Gastrocnemius medialis (tissue), 4 donors: ENCODE measurements at regions of chr11 and their contacts with region 1.

Region 1: GRCh38 chr11:8964324-8965320 is at the start of gene TMEM9B:
- DNase-seq: peak; percentile 86 to 87
- ATAC-seq: peak; percentile 94 to 96
- H3K4me3 ChIP-seq: peak within 1 kb of the TSS; percentile 79 to 98 (median 84)
- H3K27ac ChIP-seq: peak within 1 kb of the TSS; percentile 96 to 97 (median 96)
- H3K4me1 ChIP-seq: peaks cover 22 to 24% of the 10 kb centered on the region in 2 donors
- H3K27me3 ChIP-seq: no peaks in the 10 kb centered on the region
- CTCF ChIP-seq: no peak
- POLR2A ChIP-seq: peak; percentile 91 to 96
- total RNA-seq, gene TMEM9B: 29.4 to 45.3 (median 40.1) TPM

Region 2: GRCh38 chr11:8225589-8226036 is 739.0 kb before region 1 on chr11:
- in situ Hi-C with region 1: loop called in 1 of 4 experiments (anchors 25 kb)
- intact Hi-C with region 1: no loop called
- DNase-seq: peak; percentile 43 to 62
- ATAC-seq: peak; percentile 58 to 81
- H3K4me3 ChIP-seq: no peak overlapping the region
- H3K27ac ChIP-seq: no peak overlapping the region
- H3K4me1 ChIP-seq: no peaks in the 10 kb centered on the region
- H3K27me3 ChIP-seq: no peaks in the 10 kb centered on the region
- CTCF ChIP-seq: peak; percentile 95
- POLR2A ChIP-seq: no peak

Region 3: DNA sequence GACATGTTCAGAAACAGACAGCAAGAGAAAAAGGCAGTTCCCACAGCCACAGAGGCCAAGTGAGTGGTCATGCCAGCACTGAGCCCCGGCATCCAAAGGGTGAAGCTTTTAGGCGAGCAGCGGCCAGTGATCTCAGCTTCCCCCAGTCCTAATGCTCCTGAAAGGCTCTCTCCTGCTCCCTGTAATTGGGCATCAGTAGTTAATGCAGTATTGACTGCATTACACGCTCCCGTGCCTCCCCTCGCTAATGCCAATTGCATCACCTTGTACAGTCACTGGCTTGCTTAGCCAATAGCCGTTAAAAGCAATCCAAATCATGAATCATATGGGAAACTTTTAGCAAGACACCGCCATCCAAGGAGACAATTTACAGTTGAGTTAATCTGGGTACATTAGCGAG is 705.8 kb before region 1 on chr11:
- in situ Hi-C with region 1: no loop called
- intact Hi-C with region 1: loop called (anchors 10 kb)
- DNase-seq: peak; percentile 58 to 61
- ATAC-seq: peak; percentile 50 to 64
- H3K4me3 ChIP-seq: peak overlapping the region; percentile 16 to 51 (median 34)
- H3K27ac ChIP-seq: peak overlapping the region; percentile 86 to 94 (median 90)
- H3K4me1 ChIP-seq: peaks cover 36 to 40% of the 10 kb centered on the region in 2 donors
- H3K27me3 ChIP-seq: no peaks in the 10 kb centered on the region
- CTCF ChIP-seq: no peak
- POLR2A ChIP-seq: peak in 1 of 2 donors; percentile 5

Region 4: DNA sequence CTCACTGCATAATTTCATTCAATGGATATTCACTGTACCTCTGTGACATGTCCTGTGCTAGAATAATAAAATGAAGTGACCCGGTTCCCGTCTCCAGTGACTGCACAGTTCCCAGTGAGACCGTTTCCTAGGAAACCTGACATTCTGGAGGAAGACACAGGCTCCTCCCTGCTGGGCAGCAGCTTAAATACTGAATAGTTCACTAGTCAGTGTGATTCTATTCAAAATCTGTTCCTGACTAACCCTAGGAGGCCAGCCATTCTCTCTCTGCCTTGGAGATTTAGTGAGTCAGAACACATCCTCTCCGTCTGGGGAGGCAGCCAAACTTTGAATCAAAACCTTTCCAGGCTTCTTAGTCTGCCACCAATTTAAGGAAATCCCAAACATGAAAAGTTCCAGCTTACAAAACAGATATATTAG is 293.4 kb before region 1 on chr11:
- in situ Hi-C with region 1: loop called in 2 of 4 experiments (anchors 10 to 25 kb)
- intact Hi-C with region 1: no loop called
- DNase-seq: peak in 1 of 2 donors; percentile 27
- ATAC-seq: peak; percentile 82 to 83
- H3K4me3 ChIP-seq: no peak overlapping the region
- H3K27ac ChIP-seq: peak overlapping the region; percentile 54 to 67 (median 62)
- H3K4me1 ChIP-seq: peaks cover 6 to 16% of the 10 kb centered on the region in 2 donors
- H3K27me3 ChIP-seq: no peaks in the 10 kb centered on the region
- CTCF ChIP-seq: no peak
- POLR2A ChIP-seq: no peak

Region 5: GRCh38 chr11:8682303-8683114 is 282.1 kb before region 1 on chr11 and contains the starts of genes RPL27A and TRIM66:
- in situ Hi-C with region 1: loop called in 3 of 4 experiments (anchors 10 to 25 kb)
- intact Hi-C with region 1: loop called (anchors 1 kb)
- DNase-seq: peak; percentile 97
- ATAC-seq: peak; percentile 97 to 98
- H3K4me3 ChIP-seq: peak within 1 kb of the TSS; percentile 70 to 100 (median 94)
- H3K27ac ChIP-seq: peak within 1 kb of the TSS; percentile 88 to 99 (median 98)
- H3K4me1 ChIP-seq: peaks cover 25 to 26% of the 10 kb centered on the region in 2 donors
- H3K27me3 ChIP-seq: no peaks in the 10 kb centered on the region
- CTCF ChIP-seq: peak in 3 of 5 experiments; percentile 25 to 31 (median 26)
- POLR2A ChIP-seq: peak; percentile 97 to 99
- total RNA-seq, gene RPL27A: 598 to 693 (median 633) TPM
- total RNA-seq, gene TRIM66: 0.55 to 6.5 (median 1.1) TPM

Region 6: DNA sequence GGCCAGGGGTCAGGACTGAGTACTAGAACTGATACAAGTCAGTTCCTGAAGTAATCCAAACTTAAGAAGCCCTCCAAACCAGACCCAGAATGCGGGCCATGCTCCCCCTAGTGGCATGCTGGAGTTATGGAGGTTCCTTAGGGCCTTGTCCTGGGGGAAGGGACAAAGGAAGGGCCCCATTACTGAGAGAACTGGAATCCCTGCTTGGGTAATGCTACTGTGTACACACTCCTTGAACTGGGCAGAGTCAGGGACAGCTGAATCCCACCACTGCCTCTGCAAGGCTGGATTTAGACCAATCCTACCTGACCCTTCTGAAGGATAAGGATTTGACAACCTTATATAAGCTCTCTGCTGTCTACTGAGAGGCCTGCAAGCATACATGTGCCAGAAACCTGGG is 151.0 kb before region 1 on chr11:
- in situ Hi-C with region 1: no loop called
- intact Hi-C with region 1: loop called (anchors 2 kb)
- DNase-seq: peak; percentile 48 to 69
- ATAC-seq: peak; percentile 47 to 75
- H3K4me3 ChIP-seq: no peak overlapping the region
- H3K27ac ChIP-seq: peak overlapping the region; percentile 17 to 57 (median 50)
- H3K4me1 ChIP-seq: peaks cover 24 to 39% of the 10 kb centered on the region in 2 donors
- H3K27me3 ChIP-seq: no peaks in the 10 kb centered on the region
- CTCF ChIP-seq: peak; percentile 71 to 86 (median 76)
- POLR2A ChIP-seq: no peak

Region 7: GRCh38 chr11:8911029-8911826 is 53.4 kb before region 1 on chr11 and contains the start of gene AKIP1:
- in situ Hi-C with region 1: no loop called
- intact Hi-C with region 1: loop called (anchors 2 kb)
- DNase-seq: peak; percentile 89 to 91
- ATAC-seq: peak; percentile 93
- H3K4me3 ChIP-seq: peak within 1 kb of the TSS; percentile 88 to 95 (median 94)
- H3K27ac ChIP-seq: peak within 1 kb of the TSS; percentile 86 to 93 (median 90)
- H3K4me1 ChIP-seq: peaks cover 10 to 21% of the 10 kb centered on the region in 2 donors
- H3K27me3 ChIP-seq: no peaks in the 10 kb centered on the region
- CTCF ChIP-seq: no peak
- POLR2A ChIP-seq: peak in 1 of 2 donors; percentile 51
- total RNA-seq, gene AKIP1: 13.8 to 33.5 (median 25.0) TPM